ENCODE measurements at regions of chr12 and their contacts with region 1.

Region 1: GRCh38 chr12:6977656-6978055 is 6.9 kb downstream of the EMG1 start:
- DNase-seq: no peak
- H3K4me3 ChIP-seq: no peak overlapping the region
- H3K27ac ChIP-seq: no peak overlapping the region
- H3K4me1 ChIP-seq: peaks cover 14% of the 10 kb centered on the region
- H3K27me3 ChIP-seq: no peaks in the 10 kb centered on the region
- CTCF ChIP-seq: no peak

Region 2: DNA sequence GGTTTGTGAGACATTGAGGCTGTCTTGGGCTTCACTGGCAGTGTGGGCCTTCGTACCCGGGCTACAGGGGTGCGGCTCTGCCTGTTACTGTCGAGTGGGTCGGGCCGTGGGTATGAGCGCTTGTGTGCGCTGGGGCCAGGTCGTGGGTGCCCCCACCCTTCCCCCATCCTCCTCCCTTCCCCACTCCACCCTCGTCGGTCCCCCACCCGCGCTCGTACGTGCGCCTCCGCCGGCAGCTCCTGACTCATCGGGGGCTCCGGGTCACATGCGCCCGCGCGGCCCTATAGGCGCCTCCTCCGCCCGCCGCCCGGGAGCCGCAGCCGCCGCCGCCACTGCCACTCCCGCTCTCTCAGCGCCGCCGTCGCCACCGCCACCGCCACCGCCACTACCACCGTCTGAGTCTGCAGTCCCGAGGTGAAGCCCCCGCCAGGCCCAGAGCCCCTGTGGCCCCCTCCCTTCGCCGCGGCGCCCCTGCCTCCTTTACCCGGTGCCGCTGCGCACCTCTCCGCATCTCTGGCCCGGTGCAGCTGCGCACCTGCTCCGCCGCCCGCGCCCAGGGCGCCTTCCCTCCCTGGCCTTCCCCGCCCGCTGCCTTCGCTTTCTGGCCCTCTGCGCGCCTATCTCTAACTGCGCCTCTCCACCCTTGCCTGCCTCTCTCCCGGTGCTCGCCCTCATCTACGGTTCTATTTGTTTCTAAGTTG is 63.3 kb before region 1 on chr12 and contains the start of gene ENO2:
- CTCF ChIA-PET with region 1: interaction called, 12 read pairs
- POLR2A ChIA-PET with region 1: no interaction called
- intact Hi-C with region 1: no loop called
- DNase-seq: peak in 1 of 2 experiments; percentile 75
- H3K4me3 ChIP-seq: peak within 1 kb of the TSS; percentile 77
- H3K27ac ChIP-seq: no peak within 1 kb of the TSS
- H3K4me1 ChIP-seq: peaks cover 5% of the 10 kb centered on the region; the same call in 1 of the 2 replicates
- H3K27me3 ChIP-seq: peaks cover 11% of the 10 kb centered on the region
- CTCF ChIP-seq: no peak
- total RNA-seq, gene ENO2: 38.8 and 56.6 TPM in 2 replicates

Region 3: GRCh38 chr12:7012024-7012607 is 34.5 kb after region 1 on chr12:
- CTCF ChIA-PET with region 1: no interaction called
- POLR2A ChIA-PET with region 1: no interaction called
- intact Hi-C with region 1: no loop called
- DNase-seq: no peak
- H3K4me3 ChIP-seq: no peak overlapping the region
- H3K27ac ChIP-seq: no peak overlapping the region
- H3K4me1 ChIP-seq: peaks cover 25% of the 10 kb centered on the region
- H3K27me3 ChIP-seq: no peaks in the 10 kb centered on the region
- CTCF ChIP-seq: no peak

Region 4: GRCh38 chr12:7122811-7123769 is 145.4 kb after region 1 on chr12:
- CTCF ChIA-PET with region 1: interaction called, 12 read pairs
- POLR2A ChIA-PET with region 1: no interaction called
- intact Hi-C with region 1: no loop called
- DNase-seq: no peak
- H3K4me3 ChIP-seq: no peak overlapping the region
- H3K27ac ChIP-seq: no peak overlapping the region
- H3K4me1 ChIP-seq: no peaks in the 10 kb centered on the region
- H3K27me3 ChIP-seq: no peaks in the 10 kb centered on the region
- CTCF ChIP-seq: no peak

Measured in PC-9 (cell line).